Activated T-helper 2 cell treated with anti-CD3 and anti-CD28 coated beads, Interferon-gamma antibody, Interleukin-2, Interleukin-4, amounts not matched to agents 10 μg/mL and 5 μg/mL and 100 μg/mL, durations not matched to agents 14 hours and 24 hours and 36 hours (primary cell): ENCODE measurements at regions of chr1 and their contacts with region 1.

Region 1: GRCh38 chr1:212699104-212699624 is 476 bp downstream of the BATF3 start:
- DNase-seq: peak; percentile 52
- H3K4me3 Mint-ChIP-seq: peak overlapping the region; percentile 90
- H3K27ac Mint-ChIP-seq: peak overlapping the region; percentile 84
- H3K4me1 Mint-ChIP-seq: peaks cover 64% of the 10 kb centered on the region
- H3K27me3 Mint-ChIP-seq: no peaks in the 10 kb centered on the region

Region 2: GRCh38 chr1:212375986-212376385 is 323.2 kb before region 1 on chr1:
- intact Hi-C with region 1: no loop called
- DNase-seq: no peak
- H3K4me3 Mint-ChIP-seq: no peak overlapping the region
- H3K27ac Mint-ChIP-seq: no peak overlapping the region
- H3K4me1 Mint-ChIP-seq: no peaks in the 10 kb centered on the region
- H3K27me3 Mint-ChIP-seq: no peaks in the 10 kb centered on the region

Region 3: DNA sequence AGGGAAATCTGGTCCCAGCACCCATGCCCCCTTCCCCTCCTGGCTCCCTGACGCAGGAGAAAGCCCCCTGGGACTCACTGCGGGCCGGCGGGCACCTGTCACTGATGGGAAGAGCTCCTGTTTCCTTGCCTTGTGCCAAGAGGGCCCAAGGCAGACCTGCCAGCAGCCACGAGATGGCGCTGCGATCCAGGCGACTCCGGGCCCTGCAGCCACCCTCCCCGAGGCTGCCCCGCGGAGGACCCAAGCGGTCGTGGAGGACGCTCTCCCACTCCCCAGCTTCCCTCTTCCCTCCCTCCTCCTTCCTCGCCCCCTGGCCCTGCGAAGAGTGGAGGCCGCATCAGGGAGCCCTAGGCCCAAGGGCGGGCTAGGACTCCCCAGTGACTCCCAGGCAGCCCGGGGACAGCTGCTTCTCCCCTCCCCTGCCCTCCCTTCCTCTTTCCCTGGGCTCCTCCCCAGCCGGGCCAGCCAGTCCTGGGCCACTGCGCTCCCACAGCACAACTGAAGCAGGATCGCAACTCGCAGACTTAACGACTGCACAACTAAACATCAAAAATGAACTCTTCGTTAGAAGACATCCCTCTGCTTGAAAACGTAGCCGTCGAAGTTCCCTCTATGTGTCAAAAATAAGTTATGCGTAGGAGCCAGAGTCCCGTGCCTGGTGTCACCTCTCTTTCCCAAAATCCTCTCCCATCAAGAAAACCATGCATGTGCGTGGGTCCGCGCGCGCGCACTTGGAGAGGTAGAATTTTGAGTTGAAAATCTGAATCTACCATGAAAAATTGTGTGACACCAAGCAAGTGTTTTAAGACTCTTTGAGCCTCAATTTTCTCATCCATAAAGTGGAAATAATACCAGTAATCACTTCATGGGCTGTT is 33.7 kb before region 1 on chr1:
- intact Hi-C with region 1: loop called (anchors 2 kb)
- DNase-seq: peak; percentile 73
- H3K4me3 Mint-ChIP-seq: peak overlapping the region; percentile 82
- H3K27ac Mint-ChIP-seq: peak overlapping the region; percentile 73
- H3K4me1 Mint-ChIP-seq: peaks cover 42% of the 10 kb centered on the region
- H3K27me3 Mint-ChIP-seq: peaks cover 16% of the 10 kb centered on the region

Region 4: GRCh38 chr1:212712451-212713303 is 13.5 kb after region 1 on chr1:
- intact Hi-C with region 1: loop called (anchors 1 kb)
- DNase-seq: no peak
- H3K4me3 Mint-ChIP-seq: peak overlapping the region; percentile 27
- H3K27ac Mint-ChIP-seq: peak overlapping the region; percentile 91
- H3K4me1 Mint-ChIP-seq: peaks cover 44% of the 10 kb centered on the region
- H3K27me3 Mint-ChIP-seq: no peaks in the 10 kb centered on the region

Region 5: GRCh38 chr1:212752252-212752933 is 53.2 kb after region 1 on chr1:
- intact Hi-C with region 1: loop called (anchors 2 kb)
- DNase-seq: no peak
- H3K4me3 Mint-ChIP-seq: no peak overlapping the region
- H3K27ac Mint-ChIP-seq: no peak overlapping the region
- H3K4me1 Mint-ChIP-seq: peaks cover 36% of the 10 kb centered on the region
- H3K27me3 Mint-ChIP-seq: no peaks in the 10 kb centered on the region

Region 6: GRCh38 chr1:212857992-212858460 is 158.9 kb after region 1 on chr1 and contains the start of gene FLVCR1:
- intact Hi-C with region 1: loop called (anchors 1 kb)
- DNase-seq: peak; percentile 95
- H3K4me3 Mint-ChIP-seq: no peak within 1 kb of the TSS
- H3K27ac Mint-ChIP-seq: peak within 1 kb of the TSS; percentile 97
- H3K4me1 Mint-ChIP-seq: peaks cover 20% of the 10 kb centered on the region
- H3K27me3 Mint-ChIP-seq: no peaks in the 10 kb centered on the region
- total RNA-seq, gene FLVCR1: 23.0 and 24.3 TPM in 2 replicates